RWPE1 (cell line): ENCODE measurements at regions of chr12 and their contacts with region 1.

Region 1: DNA sequence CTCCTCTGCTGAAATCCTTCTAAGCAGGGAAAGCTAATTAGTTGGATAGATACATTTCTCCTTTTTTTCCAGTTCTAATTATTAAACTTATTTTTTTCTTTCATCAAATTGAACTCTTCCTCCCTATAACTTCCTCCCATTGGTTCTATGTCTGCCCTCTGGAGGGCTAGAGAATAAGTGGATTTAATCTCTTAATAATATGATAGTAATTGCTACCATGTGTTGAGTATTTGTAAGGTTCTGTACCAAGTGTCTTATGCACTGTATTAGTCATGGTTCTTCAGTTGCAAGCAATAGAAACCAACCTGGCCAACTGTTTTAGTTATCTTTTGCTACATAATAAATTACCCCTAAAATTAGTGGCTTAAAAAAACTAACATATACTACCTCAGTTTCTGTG is 190.5 kb upstream of the PLXNC1 start:
- DNase-seq: no peak
- H3K27ac ChIP-seq: no peak overlapping the region
- CTCF ChIP-seq: no peak

Region 2: GRCh38 chr12:93943766-93944165 is 14.1 kb before region 1 on chr12:
- CTCF ChIA-PET with region 1: no interaction called
- POLR2A ChIA-PET with region 1: no interaction called
- DNase-seq: peak; percentile 20
- H3K27ac ChIP-seq: no peak overlapping the region
- CTCF ChIP-seq: no peak

Region 3: GRCh38 chr12:93979189-93979588 is 21.3 kb after region 1 on chr12:
- CTCF ChIA-PET with region 1: interaction called, 13 read pairs
- POLR2A ChIA-PET with region 1: no interaction called
- DNase-seq: no peak
- H3K27ac ChIP-seq: no peak overlapping the region
- CTCF ChIP-seq: no peak

Region 4: DNA sequence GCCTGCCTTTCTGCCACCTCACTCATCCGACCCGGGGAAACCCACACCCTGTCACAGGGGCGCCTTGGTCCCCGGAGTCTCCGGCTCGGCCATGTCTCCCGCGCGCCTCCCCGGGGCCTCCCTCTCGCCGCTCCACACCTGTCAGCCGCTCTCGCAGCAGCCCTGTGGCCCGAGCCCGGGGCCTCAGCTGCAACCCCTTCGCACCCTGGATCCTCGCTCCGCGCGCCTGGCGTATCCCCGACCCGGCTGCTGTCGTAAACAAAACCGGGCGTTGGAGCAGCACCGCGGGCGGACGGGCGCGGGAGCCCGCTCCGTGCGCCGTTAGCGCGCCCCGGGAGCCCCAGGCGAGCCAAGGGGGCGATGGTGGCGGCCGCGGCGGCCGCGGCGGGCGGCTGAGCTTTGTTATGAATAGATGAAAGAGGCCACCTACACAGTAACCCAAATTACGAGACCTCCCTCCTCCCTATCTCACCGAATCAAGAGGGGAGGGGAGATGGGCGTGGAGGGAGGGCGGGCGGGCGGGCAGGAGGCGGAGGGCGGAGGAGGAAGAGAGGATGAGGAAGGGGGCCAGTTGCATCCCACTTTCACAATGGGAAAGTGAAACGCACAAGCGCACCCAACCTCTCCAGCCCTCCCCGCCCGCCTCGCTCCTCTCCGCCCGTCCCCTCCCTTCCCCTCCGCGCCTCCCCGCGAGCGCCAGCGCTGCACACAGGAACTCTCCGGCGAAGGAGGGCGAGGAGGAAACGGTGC is 190.3 kb after region 1 on chr12 and contains the start of gene PLXNC1:
- CTCF ChIA-PET with region 1: no interaction called
- POLR2A ChIA-PET with region 1: no interaction called
- DNase-seq: no peak
- H3K27ac ChIP-seq: no peak within 1 kb of the TSS
- CTCF ChIP-seq: no peak